GM12878 (cell line): ENCODE measurements at regions of chr15 and their contacts with region 1.

Region 1: GRCh38 chr15:83066734-83067637 is at the start of gene BTBD1:
- DNase-seq: peak; percentile 60
- ATAC-seq: peak; percentile 88
- H3K4me3 ChIP-seq: peak within 1 kb of the TSS; percentile 96
- H3K27ac ChIP-seq: peak within 1 kb of the TSS; percentile 93
- H3K4me1 ChIP-seq: peaks cover 21% of the 10 kb centered on the region
- H3K27me3 ChIP-seq: no peaks in the 10 kb centered on the region
- CTCF ChIP-seq: 0 out of 6 replicates have a peak, but pooled peaks of 2 of the 3 experiments have one; percentile 1 to 9
- EP300 ChIP-seq: no peak
- POLR2A ChIP-seq: peak; percentile 97
- RAD21 ChIP-seq: 0 out of 2 replicates have a peak, but pooled peaks have one; percentile 4
- polyA plus RNA-seq, gene BTBD1: 17.5 to 38.9 TPM

Region 2: GRCh38 chr15:82146990-82147461 is 920.0 kb before region 1 on chr15:
- CTCF ChIA-PET with region 1: no interaction called
- POLR2A ChIA-PET with region 1: no interaction called
- RAD21 ChIA-PET with region 1: no interaction called
- SMC1A ChIA-PET with region 1: no interaction called
- in situ Hi-C with region 1: no loop called
- intact Hi-C with region 1: no loop called
- DNase-seq: no peak
- ATAC-seq: no peak
- H3K4me3 ChIP-seq: no peak overlapping the region
- H3K27ac ChIP-seq: no peak overlapping the region
- H3K4me1 ChIP-seq: no peaks in the 10 kb centered on the region
- H3K27me3 ChIP-seq: no peaks in the 10 kb centered on the region
- CTCF ChIP-seq: no peak
- EP300 ChIP-seq: no peak
- POLR2A ChIP-seq: no peak
- RAD21 ChIP-seq: no peak

Region 3: GRCh38 chr15:82613747-82614146 is 453.2 kb before region 1 on chr15:
- CTCF ChIA-PET with region 1: no interaction called
- POLR2A ChIA-PET with region 1: no interaction called
- RAD21 ChIA-PET with region 1: no interaction called
- SMC1A ChIA-PET with region 1: no interaction called
- in situ Hi-C with region 1: no loop called
- intact Hi-C with region 1: no loop called
- DNase-seq: no peak
- ATAC-seq: no peak
- H3K4me3 ChIP-seq: no peak overlapping the region
- H3K27ac ChIP-seq: no peak overlapping the region
- H3K4me1 ChIP-seq: no peaks in the 10 kb centered on the region
- H3K27me3 ChIP-seq: no peaks in the 10 kb centered on the region
- CTCF ChIP-seq: no peak
- EP300 ChIP-seq: no peak
- POLR2A ChIP-seq: no peak
- RAD21 ChIP-seq: no peak

Region 4: GRCh38 chr15:83199288-83199687 is 132.3 kb after region 1 on chr15:
- CTCF ChIA-PET with region 1: no interaction called
- POLR2A ChIA-PET with region 1: no interaction called
- RAD21 ChIA-PET with region 1: interaction called, 4 read pairs
- SMC1A ChIA-PET with region 1: interaction called, 4 read pairs
- in situ Hi-C with region 1: no loop called
- intact Hi-C with region 1: loop called (anchors 2 kb)
- DNase-seq: peak; percentile 77
- ATAC-seq: peak; percentile 84
- H3K4me3 ChIP-seq: peak overlapping the region; percentile 33; the same call in 1 of the 2 replicates
- H3K27ac ChIP-seq: peak overlapping the region; percentile 94
- H3K4me1 ChIP-seq: peaks cover 35% of the 10 kb centered on the region
- H3K27me3 ChIP-seq: no peaks in the 10 kb centered on the region
- CTCF ChIP-seq: no peak
- EP300 ChIP-seq: peak; percentile 64 to 85; a peak in 3 of 4 replicates
- POLR2A ChIP-seq: no peak
- RAD21 ChIP-seq: no peak

Region 5: GRCh38 chr15:83339396-83339795 is 272.4 kb after region 1 on chr15:
- CTCF ChIA-PET with region 1: no interaction called
- POLR2A ChIA-PET with region 1: no interaction called
- RAD21 ChIA-PET with region 1: no interaction called
- SMC1A ChIA-PET with region 1: no interaction called
- in situ Hi-C with region 1: no loop called
- intact Hi-C with region 1: no loop called
- DNase-seq: no peak
- ATAC-seq: no peak
- H3K4me3 ChIP-seq: no peak overlapping the region
- H3K27ac ChIP-seq: no peak overlapping the region
- H3K4me1 ChIP-seq: no peaks in the 10 kb centered on the region
- H3K27me3 ChIP-seq: no peaks in the 10 kb centered on the region
- CTCF ChIP-seq: no peak
- EP300 ChIP-seq: no peak
- POLR2A ChIP-seq: no peak
- RAD21 ChIP-seq: no peak